Calu3 (cell line): ENCODE measurements at regions of chr13 and their contacts with region 1.

Region 1: GRCh38 chr13:34161931-34162543 is 344.1 kb downstream of the RFC3 start:
- DNase-seq: no peak
- H3K4me3 Mint-ChIP-seq: peak overlapping the region; percentile 32
- H3K27ac Mint-ChIP-seq: peak overlapping the region; percentile 94
- H3K4me1 Mint-ChIP-seq: peaks cover 62% of the 10 kb centered on the region
- H3K27me3 Mint-ChIP-seq: no peaks in the 10 kb centered on the region
- CTCF ChIP-seq: no peak

Region 2: GRCh38 chr13:34265016-34265692 is 103.1 kb after region 1 on chr13:
- CTCF ChIA-PET with region 1: no interaction called
- intact Hi-C with region 1: loop called (anchors 5 kb)
- DNase-seq: no peak
- H3K4me3 Mint-ChIP-seq: no peak overlapping the region
- H3K27ac Mint-ChIP-seq: peak overlapping the region; percentile 75
- H3K4me1 Mint-ChIP-seq: peaks cover 13% of the 10 kb centered on the region
- H3K27me3 Mint-ChIP-seq: no peaks in the 10 kb centered on the region
- CTCF ChIP-seq: no peak

Region 3: DNA sequence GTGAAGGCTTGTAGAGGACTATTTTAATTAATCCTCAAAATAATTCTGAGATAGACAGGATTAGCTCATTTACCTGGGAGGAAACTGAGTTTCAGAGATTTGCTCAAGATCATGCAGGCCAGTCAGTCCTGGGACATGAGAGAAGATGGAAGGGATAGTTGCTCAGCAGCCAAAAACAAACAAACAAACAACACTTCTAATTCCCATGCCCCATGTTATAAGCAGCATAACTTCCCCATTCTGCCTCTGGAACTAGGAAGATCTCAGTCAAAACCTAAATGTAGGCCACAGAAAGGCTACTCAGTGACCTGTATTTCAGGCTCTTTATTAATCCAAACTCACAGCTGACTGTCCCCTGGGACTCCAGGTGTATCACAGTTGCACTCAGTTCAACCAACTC is 290.8 kb after region 1 on chr13:
- CTCF ChIA-PET with region 1: no interaction called
- intact Hi-C with region 1: no loop called
- DNase-seq: no peak
- H3K4me3 Mint-ChIP-seq: no peak overlapping the region
- H3K27ac Mint-ChIP-seq: no peak overlapping the region
- H3K4me1 Mint-ChIP-seq: no peaks in the 10 kb centered on the region
- H3K27me3 Mint-ChIP-seq: no peaks in the 10 kb centered on the region
- CTCF ChIP-seq: no peak